GM12878 (cell line): ENCODE measurements at regions of chr19 and their contacts with region 1.

Region 1: DNA sequence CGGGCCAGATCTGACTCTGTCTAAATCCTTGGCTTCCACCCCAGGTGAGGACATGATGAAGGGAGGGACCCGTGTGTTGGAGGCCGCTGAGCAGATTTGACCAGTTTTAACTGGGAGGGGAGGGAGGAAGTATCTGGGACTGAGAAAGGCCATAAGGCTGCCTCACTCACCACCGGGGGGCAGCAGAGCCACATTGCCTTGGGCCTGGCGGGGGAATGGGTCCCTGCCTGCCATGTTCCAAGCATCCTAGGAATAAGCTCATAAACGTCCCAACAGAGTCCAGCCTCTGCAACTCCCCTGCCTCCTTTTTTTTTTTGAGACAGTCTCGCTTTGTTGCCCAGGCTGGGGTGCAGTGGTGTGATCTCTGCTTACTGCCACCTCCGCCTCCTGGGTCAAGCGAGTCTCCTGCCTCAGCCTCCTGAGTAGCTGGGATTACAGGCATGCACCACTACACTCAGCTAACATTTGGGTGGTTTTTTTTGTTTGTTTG is 15.5 kb downstream of the MAST3 start:
- DNase-seq: no peak
- ATAC-seq: peak; percentile 76
- H3K4me3 ChIP-seq: no peak overlapping the region
- H3K27ac ChIP-seq: peak overlapping the region; percentile 48; the same call in 1 of the 2 replicates
- H3K4me1 ChIP-seq: peaks cover 29% of the 10 kb centered on the region
- H3K27me3 ChIP-seq: no peaks in the 10 kb centered on the region
- CTCF ChIP-seq: peak; percentile 88 to 93 (median 91)
- EP300 ChIP-seq: no peak
- POLR2A ChIP-seq: no peak
- RAD21 ChIP-seq: peak; percentile 84

Region 2: GRCh38 chr19:18007044-18007916 is 105.8 kb before region 1 on chr19:
- CTCF ChIA-PET with region 1: interaction called, 3 read pairs
- POLR2A ChIA-PET with region 1: no interaction called
- RAD21 ChIA-PET with region 1: no interaction called
- SMC1A ChIA-PET with region 1: no interaction called
- in situ Hi-C with region 1: no loop called
- intact Hi-C with region 1: loop called (anchors 2 kb)
- DNase-seq: no peak
- ATAC-seq: peak; percentile 95
- H3K4me3 ChIP-seq: peak overlapping the region; percentile 45
- H3K27ac ChIP-seq: no peak overlapping the region
- H3K4me1 ChIP-seq: peaks cover 22% of the 10 kb centered on the region
- H3K27me3 ChIP-seq: no peaks in the 10 kb centered on the region
- CTCF ChIP-seq: peak; percentile 95 to 99 (median 98); a peak in 5 of 6 replicates
- EP300 ChIP-seq: no peak
- POLR2A ChIP-seq: no peak; the same call in 1 of the 2 replicates
- RAD21 ChIP-seq: peak; percentile 89

Region 3: DNA sequence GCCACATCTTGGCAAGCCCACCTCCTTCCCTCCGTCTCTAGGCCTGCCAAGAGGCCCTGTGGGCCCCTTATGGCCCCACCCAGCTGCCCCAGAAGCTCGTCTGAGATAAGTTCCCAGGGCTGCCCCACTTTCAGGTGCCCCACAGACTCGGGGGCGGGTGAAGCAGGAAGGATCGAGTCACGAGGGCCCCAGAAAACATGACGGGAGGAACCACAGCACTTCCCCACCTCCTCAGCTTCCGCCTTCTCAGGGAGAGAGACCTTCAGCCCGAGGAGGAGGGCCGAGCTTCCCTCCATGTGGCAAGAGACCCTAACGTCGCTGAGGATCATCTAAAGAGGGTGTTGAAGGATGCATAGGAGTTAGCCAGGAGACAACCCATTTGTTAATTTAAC is 21.8 kb before region 1 on chr19:
- CTCF ChIA-PET with region 1: interaction called, 7 read pairs
- POLR2A ChIA-PET with region 1: interaction called, 11 read pairs
- RAD21 ChIA-PET with region 1: interaction called, 14 read pairs
- SMC1A ChIA-PET with region 1: interaction called, 11 read pairs
- in situ Hi-C with region 1: no loop called
- intact Hi-C with region 1: no loop called
- DNase-seq: peak; percentile 66
- ATAC-seq: peak; percentile 70
- H3K4me3 ChIP-seq: 0 out of 2 replicates have a peak overlapping the region, but pooled peaks have one; percentile 15
- H3K27ac ChIP-seq: peak overlapping the region; percentile 93
- H3K4me1 ChIP-seq: peaks cover 34% of the 10 kb centered on the region
- H3K27me3 ChIP-seq: no peaks in the 10 kb centered on the region
- CTCF ChIP-seq: no peak
- EP300 ChIP-seq: 0 out of 4 replicates have a peak, but pooled peaks of 1 of the 2 experiments have one; percentile 29
- POLR2A ChIP-seq: peak; percentile 79
- RAD21 ChIP-seq: no peak

Region 4: GRCh38 chr19:18131841-18132596 is 19.0 kb after region 1 on chr19:
- CTCF ChIA-PET with region 1: no interaction called
- POLR2A ChIA-PET with region 1: no interaction called
- RAD21 ChIA-PET with region 1: no interaction called
- SMC1A ChIA-PET with region 1: no interaction called
- in situ Hi-C with region 1: no loop called
- intact Hi-C with region 1: no loop called
- DNase-seq: no peak
- ATAC-seq: no peak
- H3K4me3 ChIP-seq: no peak overlapping the region
- H3K27ac ChIP-seq: no peak overlapping the region
- H3K4me1 ChIP-seq: no peaks in the 10 kb centered on the region
- H3K27me3 ChIP-seq: no peaks in the 10 kb centered on the region
- CTCF ChIP-seq: no peak
- EP300 ChIP-seq: no peak
- POLR2A ChIP-seq: peak; percentile 14
- RAD21 ChIP-seq: no peak

Region 5: GRCh38 chr19:18152444-18152816 is 39.4 kb after region 1 on chr19:
- CTCF ChIA-PET with region 1: interaction called, 48 read pairs
- POLR2A ChIA-PET with region 1: interaction called, 6 read pairs
- RAD21 ChIA-PET with region 1: interaction called, 5 read pairs
- SMC1A ChIA-PET with region 1: interaction called, 4 read pairs
- in situ Hi-C with region 1: no loop called
- intact Hi-C with region 1: loop called (anchors 1 kb)
- DNase-seq: peak; percentile 99
- ATAC-seq: peak; percentile 85
- H3K4me3 ChIP-seq: peak overlapping the region; percentile 59; the same call in 1 of the 2 replicates
- H3K27ac ChIP-seq: peak overlapping the region; percentile 88
- H3K4me1 ChIP-seq: peaks cover 15% of the 10 kb centered on the region
- H3K27me3 ChIP-seq: no peaks in the 10 kb centered on the region
- CTCF ChIP-seq: peak; percentile 79 to 90 (median 85)
- EP300 ChIP-seq: peak in 1 of 2 experiments; percentile 7; a peak in 1 of 4 replicates
- POLR2A ChIP-seq: peak; percentile 68
- RAD21 ChIP-seq: peak; percentile 46; the same call in 1 of the 2 replicates

Region 6: DNA sequence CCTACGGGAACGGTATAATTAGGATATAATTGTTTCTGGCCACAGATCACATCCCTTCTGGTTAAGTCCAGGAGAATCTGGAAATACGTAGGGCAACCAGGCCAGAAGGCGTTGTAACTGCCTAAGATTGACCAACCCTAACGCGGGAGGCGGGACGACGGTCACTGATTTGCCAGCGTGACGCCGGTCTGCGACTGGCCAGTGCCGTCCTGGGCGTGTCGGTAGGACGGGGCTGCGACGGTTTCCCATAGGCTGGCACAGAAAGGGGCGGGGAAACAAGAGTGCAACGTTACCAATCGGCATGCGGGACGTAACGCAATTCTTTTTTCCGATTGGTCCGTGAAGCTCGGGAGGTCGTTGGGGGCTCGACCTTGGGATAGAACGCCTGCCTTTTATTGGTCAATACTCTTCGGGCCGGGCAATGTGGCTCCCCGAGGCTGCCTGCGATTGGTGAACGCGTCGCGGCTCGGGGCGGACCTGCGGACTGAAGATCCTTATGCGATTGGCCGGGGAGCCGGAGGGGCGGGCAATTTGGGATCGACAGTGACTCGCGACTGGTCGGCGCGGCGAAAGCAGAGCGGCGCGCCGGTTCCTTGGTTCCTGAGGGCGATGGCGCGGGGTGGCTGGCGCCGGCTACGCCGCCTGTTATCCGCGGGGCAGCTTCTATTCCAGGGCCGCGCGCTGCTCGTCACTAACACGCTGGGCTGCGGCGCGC is 79.8 kb after region 1 on chr19 and contains the start of gene MPV17L2:
- CTCF ChIA-PET with region 1: interaction called, 11 read pairs
- POLR2A ChIA-PET with region 1: no interaction called
- RAD21 ChIA-PET with region 1: interaction called, 3 read pairs
- SMC1A ChIA-PET with region 1: interaction called, 9 read pairs
- in situ Hi-C with region 1: no loop called
- intact Hi-C with region 1: no loop called
- DNase-seq: peak; percentile 100
- ATAC-seq: peak; percentile 94
- H3K4me3 ChIP-seq: peak within 1 kb of the TSS; percentile 79
- H3K27ac ChIP-seq: peak within 1 kb of the TSS; percentile 65
- H3K4me1 ChIP-seq: peaks cover 11% of the 10 kb centered on the region
- H3K27me3 ChIP-seq: no peaks in the 10 kb centered on the region
- CTCF ChIP-seq: no peak
- EP300 ChIP-seq: 0 out of 4 replicates have a peak, but pooled peaks of 1 of the 2 experiments have one; percentile 8
- POLR2A ChIP-seq: peak; percentile 72
- RAD21 ChIP-seq: no peak
- polyA plus RNA-seq, gene MPV17L2: 5.1 to 7.7 TPM